ENCODE measurements at regions of chr17 and their contacts with region 1.

Region 1: DNA sequence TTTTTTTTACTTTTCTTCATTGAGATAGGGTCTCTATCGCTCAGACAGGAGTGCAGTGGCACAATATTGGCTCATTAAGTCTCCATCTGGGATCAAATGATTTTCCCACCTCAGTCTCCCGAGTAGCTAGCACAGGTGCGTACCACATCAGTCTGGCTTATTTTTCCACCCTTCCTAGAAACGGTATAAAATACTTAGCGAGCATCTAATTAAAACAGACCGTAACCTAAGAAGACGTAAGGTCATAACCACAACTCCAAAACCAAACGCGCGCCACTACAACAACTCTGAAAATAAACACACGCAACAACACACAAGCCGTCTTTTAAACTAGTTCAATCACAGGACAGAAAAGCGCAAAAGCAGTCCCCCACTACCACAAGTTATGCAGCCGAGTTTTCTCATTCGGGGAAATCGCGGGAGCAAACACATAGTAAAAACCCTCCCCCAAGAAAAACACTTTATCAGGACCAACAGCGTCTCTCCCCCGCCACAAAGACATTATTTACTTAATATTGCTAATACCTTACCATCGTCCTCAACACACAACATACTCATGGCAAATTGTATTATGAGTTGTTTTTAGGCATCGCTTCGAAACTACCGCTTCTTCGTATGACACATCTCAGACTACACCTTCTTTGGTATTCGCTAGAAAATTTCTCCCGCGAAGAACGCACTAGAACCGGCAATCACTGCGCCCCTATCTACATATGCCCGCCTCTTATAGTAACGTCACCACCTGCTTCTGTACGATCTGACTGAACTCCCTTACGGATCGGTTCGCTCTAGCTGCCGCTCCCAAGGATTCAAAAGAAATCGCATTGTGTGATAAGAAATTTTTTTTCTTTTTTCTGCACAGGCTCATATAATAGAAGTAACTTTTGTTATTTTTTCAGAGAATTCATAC is 32.8 kb downstream of the TEX14 start:
- DNase-seq: peak; percentile 94
- H3K4me3 Mint-ChIP-seq: peak overlapping the region; percentile 78
- H3K27ac Mint-ChIP-seq: peak overlapping the region; percentile 99
- H3K4me1 Mint-ChIP-seq: peaks cover 20% of the 10 kb centered on the region
- H3K27me3 Mint-ChIP-seq: peaks cover 13% of the 10 kb centered on the region

Region 2: DNA sequence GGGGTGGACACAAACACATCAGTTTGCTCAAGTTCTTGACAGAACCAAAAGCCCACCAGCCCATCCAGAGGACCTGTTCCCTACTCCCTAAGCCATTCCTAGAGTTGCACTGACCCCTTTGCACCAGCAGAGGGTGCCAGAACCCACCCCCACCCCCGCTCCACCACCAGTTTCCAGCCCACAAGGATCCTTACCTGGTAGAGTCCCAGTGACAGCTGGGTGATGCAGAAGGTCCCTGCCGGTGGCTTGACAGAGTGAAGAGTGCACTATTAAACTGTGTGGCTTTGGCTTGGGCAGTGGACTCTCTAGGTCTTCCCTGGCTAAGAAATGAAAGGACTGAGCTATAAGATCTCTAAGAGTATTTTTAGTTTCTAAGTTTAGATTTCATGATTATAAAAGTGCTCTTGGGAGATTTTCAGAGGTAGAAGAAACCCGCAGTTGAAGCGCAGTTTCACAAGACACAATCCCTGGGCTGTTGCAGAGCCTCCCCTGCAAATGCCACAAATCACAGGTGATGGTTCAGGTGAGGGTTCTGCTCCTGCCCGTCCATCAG is 71.3 kb before region 1 on chr17:
- intact Hi-C with region 1: loop called (anchors 1 kb)
- DNase-seq: peak; percentile 82
- H3K4me3 Mint-ChIP-seq: no peak overlapping the region
- H3K27ac Mint-ChIP-seq: no peak overlapping the region
- H3K4me1 Mint-ChIP-seq: peaks cover 1% of the 10 kb centered on the region
- H3K27me3 Mint-ChIP-seq: peaks cover 6% of the 10 kb centered on the region

Region 3: DNA sequence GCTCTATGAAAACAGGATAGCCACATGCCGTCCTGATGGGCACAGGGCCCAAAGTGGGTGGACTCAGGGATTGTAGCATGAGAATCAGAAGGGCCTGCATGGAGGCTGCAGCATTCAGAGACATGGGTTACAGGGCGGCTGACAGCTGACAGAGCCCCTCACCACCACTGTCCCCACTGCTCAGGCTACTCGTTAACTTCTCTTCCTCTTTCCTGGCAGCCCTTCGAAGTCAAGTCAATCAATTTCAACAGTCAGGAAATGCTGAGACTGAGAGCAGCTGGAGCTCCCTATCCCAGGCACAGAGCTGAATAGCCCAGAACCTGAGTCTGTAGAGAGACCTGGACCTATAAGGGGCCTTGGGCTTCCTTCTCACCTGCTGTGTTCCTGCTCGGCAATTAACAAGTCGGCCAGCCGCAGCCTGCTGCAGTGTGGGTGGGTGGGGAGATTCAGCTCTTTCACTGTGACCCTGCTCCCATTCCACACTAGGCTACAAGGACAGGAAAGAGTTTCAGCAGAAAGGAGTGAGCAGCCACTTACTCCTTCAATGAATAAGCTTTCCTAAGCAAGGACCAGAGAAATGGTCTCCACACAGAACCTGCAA is 44.1 kb before region 1 on chr17:
- intact Hi-C with region 1: no loop called
- DNase-seq: no peak
- H3K4me3 Mint-ChIP-seq: no peak overlapping the region
- H3K27ac Mint-ChIP-seq: no peak overlapping the region
- H3K4me1 Mint-ChIP-seq: peaks cover 17% of the 10 kb centered on the region
- H3K27me3 Mint-ChIP-seq: peaks cover 2% of the 10 kb centered on the region

Region 4: GRCh38 chr17:58631523-58632323 is 27.3 kb before region 1 on chr17:
- intact Hi-C with region 1: loop called (anchors 1 kb)
- DNase-seq: peak; percentile 99
- H3K4me3 Mint-ChIP-seq: no peak overlapping the region
- H3K27ac Mint-ChIP-seq: no peak overlapping the region
- H3K4me1 Mint-ChIP-seq: peaks cover 2% of the 10 kb centered on the region
- H3K27me3 Mint-ChIP-seq: peaks cover 4% of the 10 kb centered on the region

Region 5: DNA sequence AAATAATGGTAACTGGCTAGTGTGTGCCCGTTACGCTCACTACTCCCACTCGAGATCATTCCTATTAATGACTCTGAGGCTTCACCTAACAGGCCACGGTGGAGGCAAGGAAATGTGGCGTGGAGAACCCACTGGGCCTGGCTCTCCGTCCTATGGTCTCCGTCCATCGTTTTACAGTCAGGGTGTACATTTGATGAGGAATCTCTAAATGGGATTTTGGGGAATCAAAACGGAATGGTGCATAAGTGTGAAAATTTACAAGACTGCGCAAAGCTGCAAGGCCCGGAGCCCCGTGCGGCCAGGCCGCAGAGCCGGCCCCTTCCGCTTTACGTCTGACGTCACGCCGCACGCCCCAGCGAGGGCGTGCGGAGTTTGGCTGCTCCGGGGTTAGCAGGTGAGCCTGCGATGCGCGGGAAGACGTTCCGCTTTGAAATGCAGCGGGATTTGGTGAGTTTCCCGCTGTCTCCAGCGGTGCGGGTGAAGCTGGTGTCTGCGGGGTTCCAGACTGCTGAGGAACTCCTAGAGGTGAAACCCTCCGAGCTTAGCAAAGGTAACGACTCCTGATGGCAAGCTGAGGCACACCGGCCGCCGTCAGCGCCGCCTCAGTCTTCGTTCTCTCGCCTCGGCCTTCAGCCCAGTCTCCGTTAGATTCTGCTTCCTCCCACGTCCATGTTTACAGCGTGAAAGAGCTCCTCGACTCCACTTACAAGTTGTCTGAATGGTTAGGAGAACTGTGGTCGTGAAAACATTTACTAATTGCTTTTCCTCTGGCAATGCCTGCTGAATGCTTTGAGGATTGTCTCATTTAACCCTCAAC is 33.4 kb after region 1 on chr17 and contains the start of gene RAD51C:
- intact Hi-C with region 1: loop called (anchors 1 kb)
- DNase-seq: peak; percentile 97
- H3K4me3 Mint-ChIP-seq: peak within 1 kb of the TSS; percentile 95
- H3K27ac Mint-ChIP-seq: peak within 1 kb of the TSS; percentile 96
- H3K4me1 Mint-ChIP-seq: peaks cover 21% of the 10 kb centered on the region
- H3K27me3 Mint-ChIP-seq: no peaks in the 10 kb centered on the region
- total RNA-seq, gene RAD51C: 73.7 and 78.8 TPM in 2 replicates

Region 6: GRCh38 chr17:58703137-58703972 is 44.3 kb after region 1 on chr17:
- intact Hi-C with region 1: loop called (anchors 2 kb)
- DNase-seq: no peak
- H3K4me3 Mint-ChIP-seq: no peak overlapping the region
- H3K27ac Mint-ChIP-seq: no peak overlapping the region
- H3K4me1 Mint-ChIP-seq: peaks cover 27% of the 10 kb centered on the region
- H3K27me3 Mint-ChIP-seq: no peaks in the 10 kb centered on the region